A549 (cell line): ENCODE measurements at regions of chr12 and their contacts with region 1.

Region 1: DNA sequence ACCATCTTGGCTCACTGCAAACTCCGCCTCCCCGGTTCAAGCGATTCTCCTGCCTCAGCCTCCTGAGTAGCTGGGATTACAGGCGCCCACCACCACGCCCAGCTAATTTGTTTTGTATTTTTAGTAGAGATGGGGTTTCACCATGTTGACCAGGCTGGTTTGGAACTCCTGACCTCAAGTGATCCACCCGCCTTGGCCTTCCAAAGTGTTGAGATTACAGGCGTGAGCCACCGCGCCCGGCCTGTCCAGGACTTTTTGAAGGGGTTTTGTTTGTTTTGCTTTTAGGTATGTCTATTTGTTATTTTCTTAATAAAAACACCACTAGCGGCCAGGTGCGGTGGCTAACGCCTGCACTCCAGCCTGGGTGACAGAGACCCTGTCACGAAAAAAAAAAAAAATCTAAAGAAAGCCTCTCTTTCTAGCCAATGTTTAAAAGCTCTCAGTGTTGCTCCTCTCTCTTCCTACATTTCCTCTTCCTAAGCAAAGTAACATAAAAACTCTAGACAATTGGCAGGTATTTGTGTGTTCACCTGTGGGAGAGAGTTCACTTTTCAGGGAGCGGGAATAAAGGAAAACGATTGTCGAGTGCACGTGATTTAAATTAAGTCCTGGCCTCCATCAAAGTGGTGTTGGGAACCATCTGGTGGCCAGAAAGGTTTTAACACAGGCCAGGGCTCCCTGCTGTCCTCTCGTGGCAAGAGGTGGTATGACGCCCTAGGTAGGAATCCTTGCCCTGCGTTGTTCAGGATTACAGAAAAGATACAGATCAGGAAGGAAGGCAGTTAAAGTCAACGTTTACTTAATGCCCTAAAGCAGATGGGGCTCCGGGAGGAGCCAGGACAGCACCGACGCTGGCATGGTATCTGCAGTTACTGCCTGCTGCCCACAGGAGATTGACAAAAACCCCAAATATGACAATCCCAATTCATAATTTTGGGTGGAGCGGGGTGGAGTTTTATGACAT is 36.2 kb upstream of the ATP23 start:
- DNase-seq: peak; percentile 71 to 92
- ATAC-seq: peak; percentile 86 to 95
- H3K4me3 ChIP-seq: no peak overlapping the region
- H3K27ac ChIP-seq: peak overlapping the region; percentile 41 to 72; a peak in 5 of 6 replicates
- H3K4me1 ChIP-seq: no peaks in the 10 kb centered on the region
- CTCF ChIP-seq: peak; percentile 100
- EP300 ChIP-seq: no peak
- POLR2A ChIP-seq: no peak
- RAD21 ChIP-seq: peak; percentile 100

Region 2: GRCh38 chr12:57487597-57488401 is 417.3 kb before region 1 on chr12 and contains the start of gene MARS1:
- CTCF ChIA-PET with region 1: no interaction called
- POLR2A ChIA-PET with region 1: no interaction called
- DNase-seq: peak; percentile 94 to 98
- ATAC-seq: peak; percentile 98
- H3K4me3 ChIP-seq: peak within 1 kb of the TSS; percentile 79
- H3K27ac ChIP-seq: peak within 1 kb of the TSS; percentile 94 to 99
- H3K4me1 ChIP-seq: peaks cover 12% of the 10 kb centered on the region
- CTCF ChIP-seq: peak; percentile 45
- EP300 ChIP-seq: no peak
- POLR2A ChIP-seq: peak; percentile 76
- RAD21 ChIP-seq: no peak; a peak in 1 of 5 replicates
- polyA plus RNA-seq, gene MARS1: 372 and 406 TPM in 2 replicates

Region 3: DNA sequence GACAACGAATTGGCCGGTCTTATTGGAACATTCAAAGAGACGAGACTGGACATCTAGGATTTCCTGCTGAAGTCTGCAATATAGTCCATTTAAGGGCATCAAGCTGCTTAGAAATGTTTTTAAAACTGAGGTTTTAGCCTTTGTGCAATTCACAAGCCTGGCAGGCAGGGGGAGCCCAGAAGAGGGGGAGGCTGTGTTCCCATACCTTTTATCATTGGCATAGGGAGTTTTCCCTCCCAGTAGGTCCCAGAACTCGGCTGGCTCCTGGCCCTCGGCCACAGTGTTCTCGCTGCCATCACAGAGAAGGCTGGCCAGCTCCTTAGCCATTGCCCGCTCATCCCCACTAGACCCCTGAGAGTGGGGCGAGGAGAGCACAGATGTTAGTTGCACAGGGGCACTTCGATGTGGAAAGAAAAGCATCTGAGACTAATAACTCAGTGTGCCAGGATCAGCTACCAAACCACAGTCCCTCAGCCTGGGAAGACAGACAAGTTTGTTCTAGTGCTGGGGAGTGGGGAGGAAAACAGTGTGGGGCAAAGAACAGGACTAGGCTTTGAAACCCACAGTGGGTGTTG is 101.7 kb before region 1 on chr12:
- CTCF ChIA-PET with region 1: interaction called, 64 read pairs
- POLR2A ChIA-PET with region 1: no interaction called
- DNase-seq: peak; percentile 53 to 69
- ATAC-seq: peak; percentile 86 to 91
- H3K4me3 ChIP-seq: no peak overlapping the region
- H3K27ac ChIP-seq: no peak overlapping the region
- H3K4me1 ChIP-seq: no peaks in the 10 kb centered on the region
- CTCF ChIP-seq: peak; percentile 70
- EP300 ChIP-seq: no peak
- POLR2A ChIP-seq: no peak
- RAD21 ChIP-seq: peak; percentile 61 to 63

Region 4: DNA sequence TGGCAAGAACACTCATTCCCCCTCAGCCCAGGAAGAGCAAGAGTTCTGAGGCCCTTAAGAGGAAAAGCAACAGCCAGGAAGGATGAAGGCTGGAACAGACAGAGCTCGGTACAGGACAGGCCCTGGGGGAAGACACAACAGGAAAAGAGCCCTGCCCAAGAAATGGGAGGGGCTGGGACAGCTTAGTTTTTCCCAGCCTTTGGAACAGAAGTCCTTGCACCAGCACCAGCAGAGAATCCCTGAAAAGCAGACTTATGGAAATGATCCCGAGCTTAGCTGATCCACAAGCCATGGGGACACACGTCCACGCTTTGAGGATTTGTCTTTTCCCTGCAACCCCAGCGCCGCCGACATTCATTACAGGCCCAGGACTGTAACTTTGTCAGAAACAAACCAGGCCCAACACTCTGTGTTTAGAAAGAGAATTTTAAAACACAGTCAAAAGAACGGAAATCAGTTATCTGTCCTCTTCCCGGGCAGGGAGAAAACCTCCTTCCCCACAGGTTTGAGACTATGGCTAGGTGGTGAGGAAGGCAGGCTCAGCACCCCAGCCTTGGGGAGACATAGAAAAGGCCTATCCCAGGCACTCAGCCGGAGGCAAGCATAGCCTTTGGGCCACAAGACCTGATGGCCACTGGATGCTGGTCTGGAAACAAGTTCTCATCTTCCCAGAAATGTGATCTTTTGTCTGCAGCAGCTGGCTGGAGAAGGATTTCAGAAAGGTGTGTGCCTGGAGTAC is 82.6 kb before region 1 on chr12:
- CTCF ChIA-PET with region 1: interaction called, 142 read pairs
- POLR2A ChIA-PET with region 1: no interaction called
- DNase-seq: no peak
- ATAC-seq: no peak
- H3K4me3 ChIP-seq: no peak overlapping the region
- H3K27ac ChIP-seq: no peak overlapping the region
- H3K4me1 ChIP-seq: no peaks in the 10 kb centered on the region
- CTCF ChIP-seq: no peak
- EP300 ChIP-seq: no peak
- POLR2A ChIP-seq: no peak
- RAD21 ChIP-seq: no peak

Region 5: GRCh38 chr12:57846577-57847319 is 58.4 kb before region 1 on chr12 and contains the start of gene CTDSP2:
- CTCF ChIA-PET with region 1: interaction called, 122 read pairs
- POLR2A ChIA-PET with region 1: no interaction called
- DNase-seq: peak; percentile 99
- ATAC-seq: peak; percentile 66 to 82
- H3K4me3 ChIP-seq: peak within 1 kb of the TSS; percentile 97
- H3K27ac ChIP-seq: peak within 1 kb of the TSS; percentile 90 to 100
- H3K4me1 ChIP-seq: peaks cover 35% of the 10 kb centered on the region
- CTCF ChIP-seq: no peak
- EP300 ChIP-seq: no peak
- POLR2A ChIP-seq: peak; percentile 44
- RAD21 ChIP-seq: no peak
- polyA plus RNA-seq, gene CTDSP2: 87.7 and 114 TPM in 2 replicates

Region 6: GRCh38 chr12:57888409-57889157 is 16.5 kb before region 1 on chr12:
- CTCF ChIA-PET with region 1: interaction called, 73 read pairs
- POLR2A ChIA-PET with region 1: no interaction called
- DNase-seq: no peak
- ATAC-seq: peak; percentile 27 to 48; a peak in 3 of 6 replicates
- H3K4me3 ChIP-seq: no peak overlapping the region
- H3K27ac ChIP-seq: peak overlapping the region; percentile 60 to 84
- H3K4me1 ChIP-seq: peaks cover 53% of the 10 kb centered on the region
- CTCF ChIP-seq: no peak
- EP300 ChIP-seq: no peak
- POLR2A ChIP-seq: no peak
- RAD21 ChIP-seq: no peak

Region 7: DNA sequence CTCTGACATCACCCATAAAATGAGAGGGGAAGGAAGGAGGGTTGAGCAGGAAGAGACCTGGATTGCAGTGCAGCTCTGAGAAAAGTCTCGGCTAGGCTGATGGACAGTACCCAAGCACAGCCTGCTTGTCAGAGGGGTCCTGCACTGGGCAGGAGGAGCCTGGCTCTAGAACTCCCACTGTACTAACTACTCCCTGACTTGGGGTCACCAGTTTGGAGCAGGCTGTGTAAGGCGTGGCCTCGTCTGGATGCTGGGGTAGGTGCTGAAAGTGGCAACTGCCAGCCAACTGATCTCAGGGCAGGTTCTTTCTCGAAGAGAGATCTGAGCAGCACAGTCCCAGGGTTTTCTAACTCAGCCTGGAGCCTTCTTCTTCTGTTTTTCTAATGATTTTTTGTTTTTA is 212.5 kb after region 1 on chr12:
- CTCF ChIA-PET with region 1: no interaction called
- POLR2A ChIA-PET with region 1: no interaction called
- DNase-seq: no peak
- ATAC-seq: peak in 1 of 2 experiments; percentile 23; a peak in 1 of 6 replicates
- H3K4me3 ChIP-seq: no peak overlapping the region
- H3K27ac ChIP-seq: no peak overlapping the region
- H3K4me1 ChIP-seq: no peaks in the 10 kb centered on the region
- CTCF ChIP-seq: no peak
- EP300 ChIP-seq: no peak
- POLR2A ChIP-seq: no peak
- RAD21 ChIP-seq: no peak